ENCODE measurements at regions of chr10 and their contacts with region 1.

Region 1: DNA sequence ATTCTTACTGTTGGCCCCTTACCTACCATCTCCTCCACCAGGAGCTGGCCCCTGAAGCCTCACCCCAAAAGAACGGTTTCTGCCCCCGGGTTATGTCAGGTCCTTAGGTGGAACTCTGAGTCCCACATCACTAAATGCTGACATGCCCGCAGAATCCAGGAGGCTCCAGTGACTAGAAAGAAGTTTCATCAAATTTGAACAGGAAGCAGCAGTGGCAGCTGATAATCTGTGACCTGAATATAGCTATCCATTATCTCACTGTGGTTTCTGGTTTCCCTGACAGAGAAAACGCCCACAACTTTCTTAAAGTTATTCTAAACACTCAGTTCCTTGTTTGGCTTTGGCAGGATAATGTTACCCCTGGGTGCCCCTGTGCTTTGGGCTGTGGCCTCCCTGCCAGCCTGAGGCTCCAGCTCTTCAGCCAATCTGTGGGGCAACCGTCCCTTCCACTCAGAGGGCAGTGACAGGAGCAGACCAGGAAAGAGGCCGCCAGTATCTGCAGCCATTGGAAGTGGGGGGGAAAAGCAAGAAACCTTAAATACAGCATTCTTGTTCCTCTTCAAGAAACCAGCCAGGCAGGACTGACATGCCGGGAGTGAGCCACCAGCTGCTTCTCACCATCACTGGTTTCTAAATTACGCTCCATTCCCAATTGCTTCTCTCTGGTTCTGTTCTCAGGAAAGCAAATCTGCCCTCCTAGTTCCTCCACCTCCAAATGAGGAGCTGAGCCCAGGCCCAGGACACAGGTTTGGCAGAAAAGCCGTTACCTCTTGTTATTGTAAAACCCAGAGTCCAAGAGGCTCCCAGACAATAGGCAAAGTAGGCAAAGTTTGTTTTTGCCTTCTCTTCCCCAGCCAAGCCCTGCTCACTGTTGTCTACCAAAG is 41.2 kb upstream of the VCL start:
- DNase-seq: peak; percentile 59
- H3K4me3 Mint-ChIP-seq: peak overlapping the region; percentile 36
- H3K27ac Mint-ChIP-seq: peak overlapping the region; percentile 79
- H3K4me1 Mint-ChIP-seq: peaks cover 43% of the 10 kb centered on the region
- H3K27me3 Mint-ChIP-seq: no peaks in the 10 kb centered on the region

Region 2: DNA sequence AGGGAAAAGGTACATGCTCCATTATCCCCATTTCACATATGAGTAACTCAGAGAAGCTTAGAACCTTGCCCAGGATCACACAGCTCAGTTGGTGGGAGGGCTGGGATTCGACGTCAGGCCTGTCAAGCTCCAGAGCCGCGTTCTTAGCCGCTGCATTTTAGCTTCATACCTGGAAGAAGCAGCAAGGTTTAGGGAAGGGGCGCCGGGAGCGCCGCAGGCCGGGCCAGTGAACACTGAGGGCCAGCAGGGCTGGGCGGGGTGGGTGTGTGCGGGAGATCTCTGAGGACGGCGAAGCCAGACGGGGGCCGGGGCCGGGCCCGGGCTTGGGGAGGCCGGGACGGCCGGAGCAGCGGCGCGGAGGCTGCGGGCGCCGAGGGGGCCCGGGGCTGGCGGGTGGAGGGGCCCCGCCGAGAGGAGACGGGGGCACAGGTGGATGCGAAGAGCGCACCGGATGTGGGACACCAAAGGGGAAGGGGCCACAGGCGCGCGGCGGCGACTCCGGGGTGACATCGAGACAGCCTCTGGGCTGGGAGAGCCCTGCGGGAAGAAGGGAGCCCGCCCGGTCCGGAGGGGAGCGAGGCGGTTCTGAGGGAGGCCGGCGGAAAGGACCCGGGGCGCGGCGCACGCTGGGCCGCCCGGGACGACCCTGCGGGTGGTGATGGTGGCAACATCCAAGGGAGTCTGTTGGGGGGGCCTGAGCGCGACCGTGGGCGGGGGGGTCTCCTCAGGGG is 145.8 kb before region 1 on chr10:
- CTCF ChIA-PET with region 1: no interaction called
- intact Hi-C with region 1: no loop called
- DNase-seq: peak; percentile 63
- H3K4me3 Mint-ChIP-seq: peak overlapping the region; percentile 93
- H3K27ac Mint-ChIP-seq: peak overlapping the region; percentile 99
- H3K4me1 Mint-ChIP-seq: peaks cover 47% of the 10 kb centered on the region
- H3K27me3 Mint-ChIP-seq: no peaks in the 10 kb centered on the region

Region 3: DNA sequence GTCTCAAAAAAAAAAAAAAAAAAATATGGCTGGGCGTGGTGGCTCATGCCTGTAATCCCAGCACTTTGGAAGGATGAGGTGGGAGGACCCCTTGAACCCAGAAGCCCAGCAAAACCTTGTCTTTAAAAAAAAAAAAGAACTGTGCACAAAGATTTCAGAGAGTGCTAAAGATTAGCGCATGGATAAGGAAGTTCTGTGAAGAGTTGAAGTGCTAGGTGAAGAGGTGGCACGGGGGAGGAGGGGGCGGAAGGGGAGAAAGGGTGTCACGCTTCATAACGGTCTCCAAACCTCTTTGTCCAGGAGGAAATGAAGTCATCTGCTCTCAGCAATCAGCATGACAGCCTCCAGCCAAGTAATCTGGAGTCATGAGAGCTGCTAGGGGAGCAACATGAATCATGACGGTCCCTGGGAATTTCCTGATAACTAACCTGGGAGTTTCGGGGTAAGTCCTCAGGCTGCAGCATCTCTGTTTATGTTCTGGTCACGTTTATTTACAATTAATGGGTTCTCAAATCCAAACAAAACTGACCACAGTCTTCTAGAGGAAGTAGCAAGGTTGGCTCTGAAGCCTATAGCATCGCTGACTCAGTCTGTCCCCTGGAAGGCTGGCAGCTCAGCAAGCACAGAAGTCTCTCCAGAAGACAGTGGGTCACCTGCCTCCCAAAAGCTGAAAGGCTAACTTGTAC is 47.7 kb before region 1 on chr10:
- CTCF ChIA-PET with region 1: interaction called, 3 read pairs
- intact Hi-C with region 1: loop called (anchors 1 kb)
- DNase-seq: peak; percentile 86
- H3K4me3 Mint-ChIP-seq: peak overlapping the region; percentile 20
- H3K27ac Mint-ChIP-seq: peak overlapping the region; percentile 7
- H3K4me1 Mint-ChIP-seq: peaks cover 34% of the 10 kb centered on the region
- H3K27me3 Mint-ChIP-seq: peaks cover 38% of the 10 kb centered on the region

Region 4: GRCh38 chr10:73997787-73998622 is 41.3 kb after region 1 on chr10 and contains the start of gene VCL:
- CTCF ChIA-PET with region 1: interaction called, 7 read pairs
- intact Hi-C with region 1: loop called (anchors 1 kb)
- DNase-seq: peak; percentile 96
- H3K4me3 Mint-ChIP-seq: peak within 1 kb of the TSS; percentile 86
- H3K27ac Mint-ChIP-seq: peak within 1 kb of the TSS; percentile 89
- H3K4me1 Mint-ChIP-seq: peaks cover 26% of the 10 kb centered on the region
- H3K27me3 Mint-ChIP-seq: no peaks in the 10 kb centered on the region
- total RNA-seq, gene VCL: 13.4 to 14.4 TPM

Region 5: GRCh38 chr10:74058658-74059057 is 101.9 kb after region 1 on chr10:
- CTCF ChIA-PET with region 1: interaction called, 7 read pairs
- intact Hi-C with region 1: loop called (anchors 1 kb)
- DNase-seq: peak; percentile 48
- H3K4me3 Mint-ChIP-seq: no peak overlapping the region
- H3K27ac Mint-ChIP-seq: no peak overlapping the region
- H3K4me1 Mint-ChIP-seq: peaks cover 21% of the 10 kb centered on the region
- H3K27me3 Mint-ChIP-seq: no peaks in the 10 kb centered on the region

Region 6: GRCh38 chr10:74081192-74081803 is 124.6 kb after region 1 on chr10:
- CTCF ChIA-PET with region 1: interaction called, 6 read pairs
- intact Hi-C with region 1: loop called (anchors 2 kb)
- DNase-seq: peak; percentile 56
- H3K4me3 Mint-ChIP-seq: no peak overlapping the region
- H3K27ac Mint-ChIP-seq: no peak overlapping the region
- H3K4me1 Mint-ChIP-seq: peaks cover 23% of the 10 kb centered on the region
- H3K27me3 Mint-ChIP-seq: no peaks in the 10 kb centered on the region

Region 7: DNA sequence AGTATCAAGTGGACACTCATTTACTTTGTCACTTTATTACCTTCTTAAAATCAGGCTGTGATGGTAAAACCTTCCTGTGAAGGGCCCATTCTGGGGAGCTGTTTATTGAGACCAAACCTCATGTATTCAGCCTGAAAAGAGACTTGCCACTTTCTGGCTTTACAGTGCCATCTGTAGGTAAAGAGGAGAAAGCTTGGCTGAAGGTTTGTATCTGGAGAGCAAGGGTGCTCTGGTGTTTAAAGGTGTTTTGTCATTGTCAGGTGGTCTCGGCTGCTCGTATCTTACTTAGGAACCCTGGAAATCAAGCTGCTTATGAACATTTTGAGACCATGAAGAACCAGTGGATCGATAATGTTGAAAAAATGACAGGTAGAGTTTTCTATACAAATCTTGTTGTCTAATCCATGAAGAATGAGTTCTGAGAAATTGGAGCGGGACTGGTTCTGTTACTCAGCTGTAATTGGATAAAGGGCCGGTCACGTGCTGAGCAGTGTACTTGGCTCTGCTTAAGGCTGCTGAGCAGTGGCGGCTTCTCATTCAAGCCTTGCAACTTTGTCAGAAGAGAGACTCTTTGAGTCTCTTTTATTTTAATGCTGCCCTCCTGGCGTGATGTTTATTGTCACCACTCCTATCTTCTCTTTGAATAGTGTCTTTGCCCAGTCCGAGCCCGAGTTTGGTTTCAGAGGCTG is 147.0 kb after region 1 on chr10:
- CTCF ChIA-PET with region 1: interaction called, 9 read pairs
- intact Hi-C with region 1: loop called (anchors 5 kb)
- DNase-seq: no peak
- H3K4me3 Mint-ChIP-seq: no peak overlapping the region
- H3K27ac Mint-ChIP-seq: no peak overlapping the region
- H3K4me1 Mint-ChIP-seq: no peaks in the 10 kb centered on the region
- H3K27me3 Mint-ChIP-seq: no peaks in the 10 kb centered on the region

Measured in activated naive CD4-positive, alpha-beta T cell treated with anti-CD3 and anti-CD28 coated beads for 36 hours (primary cell).